Cardiac septum (tissue), 1 donor: ENCODE measurements at regions of chr11 and their contacts with region 1.

Region 1: GRCh38 chr11:102940714-102941588 is 14.6 kb downstream of the MMP13 start:
- DNase-seq: no peak

Region 2: GRCh38 chr11:102733232-102733875 is 207.6 kb before region 1 on chr11:
- intact Hi-C with region 1: loop called (anchors 5 kb)
- DNase-seq: no peak

Region 3: DNA sequence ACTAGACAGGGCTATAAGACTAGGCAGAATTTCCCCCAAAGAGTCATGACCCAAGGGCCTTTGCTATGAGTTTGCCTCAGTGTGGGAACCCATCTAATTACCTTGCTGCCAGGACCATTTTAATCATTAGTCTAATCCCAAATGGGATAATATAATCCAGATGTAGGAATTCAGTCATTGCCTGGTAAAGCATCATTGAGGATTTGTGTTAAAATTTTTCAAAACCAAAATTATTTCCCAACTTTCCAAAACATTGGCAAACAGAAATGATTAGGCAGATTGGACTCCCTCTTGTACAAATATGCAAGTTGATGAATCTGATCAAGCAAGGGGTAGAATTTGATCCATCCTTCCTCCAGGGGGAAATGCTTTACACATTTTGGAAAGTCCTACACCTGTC is 30.8 kb after region 1 on chr11:
- intact Hi-C with region 1: no loop called
- DNase-seq: no peak